Activated T-helper 2 cell treated with anti-CD3 and anti-CD28 coated beads, Interferon-gamma antibody, Interleukin-2, Interleukin-4, amounts not matched to agents 10 μg/mL and 5 μg/mL and 100 μg/mL, durations not matched to agents 14 hours and 24 hours and 36 hours (primary cell): ENCODE measurements at regions of chr22 and their contacts with region 1.

Region 1: DNA sequence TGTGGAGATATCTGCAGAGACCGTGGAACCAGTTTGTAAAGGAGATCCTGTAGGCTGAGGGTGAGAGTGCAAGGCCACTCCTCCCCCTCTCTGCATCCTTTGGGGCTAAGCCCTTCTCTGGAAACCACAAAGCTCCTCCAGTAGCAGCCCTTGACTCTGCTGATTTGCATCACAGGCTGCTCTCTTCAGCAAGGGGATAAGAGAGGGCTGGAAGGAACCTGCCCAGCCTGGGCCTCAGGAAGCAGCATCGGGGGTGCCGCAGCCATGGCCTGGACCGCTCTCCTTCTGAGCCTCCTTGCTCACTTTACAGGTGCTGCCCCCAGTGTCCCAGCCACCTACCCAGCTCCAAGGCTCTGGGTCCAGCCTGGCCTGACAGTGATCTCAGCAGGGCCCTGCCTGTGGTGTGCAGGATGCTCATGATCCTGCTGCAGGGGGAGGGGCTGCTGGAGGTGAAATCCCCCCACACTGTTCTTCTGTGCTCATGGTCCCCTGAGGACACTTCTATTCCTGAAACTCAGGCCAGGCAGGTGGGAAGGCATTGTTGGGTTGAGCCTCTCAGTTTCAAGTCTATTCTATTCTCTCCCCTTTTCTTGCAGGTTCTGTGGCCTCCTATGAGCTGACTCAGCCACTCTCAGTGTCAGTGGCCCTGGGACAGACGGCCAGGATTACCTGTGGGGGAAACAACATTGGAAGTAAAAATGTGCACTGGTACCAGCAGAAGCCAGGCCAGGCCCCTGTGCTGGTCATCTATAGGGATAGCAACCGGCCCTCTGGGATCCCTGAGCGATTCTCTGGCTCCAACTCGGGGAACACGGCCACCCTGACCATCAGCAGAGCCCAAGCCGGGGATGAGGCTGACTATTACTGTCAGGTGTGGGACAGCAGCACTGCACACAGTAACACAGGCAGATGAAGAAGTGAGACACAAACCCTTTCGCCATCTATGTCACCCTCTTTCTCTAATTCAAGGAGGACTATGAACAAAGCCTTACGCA is 68.5 kb upstream of the IGLL5 start:
- DNase-seq: peak; percentile 58
- H3K4me3 Mint-ChIP-seq: peak overlapping the region; percentile 49
- H3K27ac Mint-ChIP-seq: peak overlapping the region; percentile 71
- H3K4me1 Mint-ChIP-seq: peaks cover 83% of the 10 kb centered on the region
- H3K27me3 Mint-ChIP-seq: no peaks in the 10 kb centered on the region

Region 2: DNA sequence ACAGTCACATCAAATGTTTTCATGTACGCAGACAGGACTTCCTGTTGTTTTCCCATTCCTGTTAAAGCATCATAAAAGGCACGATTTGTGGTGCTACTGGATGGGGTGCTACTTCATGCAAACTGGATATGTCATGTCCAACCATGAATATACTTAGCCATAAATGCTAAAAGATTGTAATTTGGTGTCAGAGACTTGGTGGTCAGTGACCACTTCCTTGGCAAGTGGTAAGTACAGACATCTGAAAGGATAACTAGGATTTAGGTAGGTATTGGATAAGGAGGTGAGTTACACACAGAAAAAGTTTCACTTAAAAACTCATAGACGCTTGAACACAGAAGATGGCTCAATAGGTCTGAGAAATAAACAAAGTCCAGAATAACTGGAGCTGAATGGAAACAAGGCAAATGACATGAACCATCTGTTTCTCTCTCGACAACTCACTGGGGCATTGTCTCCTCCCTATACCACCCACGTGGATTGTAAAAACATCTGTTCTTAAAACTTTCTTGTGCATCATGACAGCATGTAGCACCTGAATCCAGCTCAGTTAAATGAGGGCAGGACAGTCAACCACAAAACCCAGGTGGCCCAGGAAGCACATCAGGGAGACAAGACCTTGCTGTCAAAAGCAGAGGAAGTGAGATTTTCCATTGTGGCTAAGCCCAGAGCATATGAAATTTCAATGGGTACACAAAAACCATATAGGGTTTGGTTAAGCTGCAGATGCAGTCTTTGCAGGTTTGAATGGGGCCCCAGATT is 46.3 kb after region 1 on chr22:
- intact Hi-C with region 1: loop called (anchors 5 kb)
- DNase-seq: peak; percentile 25
- H3K4me3 Mint-ChIP-seq: no peak overlapping the region
- H3K27ac Mint-ChIP-seq: no peak overlapping the region
- H3K4me1 Mint-ChIP-seq: peaks cover 28% of the 10 kb centered on the region
- H3K27me3 Mint-ChIP-seq: peaks cover 50% of the 10 kb centered on the region